ENCODE measurements at regions of chr17 and their contacts with region 1.

Region 1: DNA sequence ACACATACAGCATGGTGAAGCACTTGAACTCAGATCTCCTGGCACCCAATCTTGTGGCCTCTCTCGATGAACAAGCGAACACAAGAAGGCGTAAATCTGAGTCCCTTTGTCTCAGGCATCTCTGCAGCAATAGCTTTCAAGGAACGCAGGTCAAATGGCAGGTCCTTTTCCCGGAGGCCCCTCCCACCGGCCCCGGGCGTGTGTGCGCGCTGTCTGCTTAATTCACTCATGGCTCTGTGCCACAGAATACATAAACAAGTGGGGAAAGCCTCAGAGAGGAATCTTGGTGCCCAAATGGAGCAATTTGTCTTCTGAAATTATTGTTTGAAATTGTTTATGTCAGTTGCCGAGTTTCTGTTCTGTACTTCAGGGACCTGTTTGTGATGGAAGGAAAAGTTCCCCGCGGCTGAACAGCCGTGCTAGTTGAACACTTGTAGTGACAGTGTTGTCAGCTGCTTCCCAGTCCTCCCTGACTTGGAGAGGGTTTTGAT is 14.8 kb downstream of the MYOCD start:
- DNase-seq: no peak
- ATAC-seq: no peak

Region 2: DNA sequence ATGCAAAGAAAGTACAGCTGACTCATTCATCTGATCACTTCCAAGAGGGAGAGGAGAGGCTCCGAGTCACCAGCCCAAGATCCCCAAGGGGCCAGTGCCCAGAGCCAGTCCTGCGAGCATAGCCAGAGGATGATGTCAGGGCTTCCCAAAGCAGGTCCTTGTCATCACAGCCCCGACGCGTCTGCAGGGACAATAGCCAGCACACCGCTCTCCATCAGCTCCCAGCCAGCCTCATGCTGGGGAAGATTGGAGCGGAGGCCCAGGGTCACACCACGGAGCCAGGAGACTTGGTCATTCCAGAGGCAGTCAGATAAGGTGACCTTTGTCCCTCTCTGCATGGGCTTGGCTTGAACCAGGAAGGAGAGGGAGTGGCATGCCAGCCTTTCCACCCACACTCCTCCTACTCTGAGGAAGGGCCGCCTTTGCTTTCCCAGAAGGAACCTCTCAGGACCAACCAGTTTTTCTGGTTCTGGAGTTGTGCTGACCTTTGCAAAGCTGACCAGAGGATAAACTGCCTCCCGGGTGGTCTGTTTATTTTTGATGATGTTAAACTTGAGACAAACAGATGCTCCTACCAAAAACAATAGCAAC is 50.6 kb after region 1 on chr17:
- intact Hi-C with region 1: loop called (anchors 5 to 10 kb)
- DNase-seq: peak; percentile 85
- ATAC-seq: peak; percentile 78 to 85

Region 3: DNA sequence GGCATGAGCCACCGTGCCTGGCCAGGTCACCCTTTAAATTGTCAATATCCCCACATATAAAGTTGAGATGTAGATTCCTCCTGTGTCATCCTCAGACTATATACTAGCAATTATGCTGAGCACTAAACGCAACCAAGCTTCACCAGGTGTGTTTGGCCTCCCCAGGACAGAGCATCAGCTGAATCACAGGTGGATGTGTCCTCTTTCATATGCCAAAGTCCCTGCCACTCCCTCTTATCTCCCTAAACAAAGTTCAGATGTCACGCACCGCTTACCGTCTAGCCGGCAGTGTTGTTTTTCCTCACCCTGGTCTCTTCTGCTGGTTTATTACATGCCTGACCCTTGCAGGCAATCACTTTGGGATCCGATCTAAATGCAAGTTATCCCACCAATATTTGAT is 65.0 kb after region 1 on chr17:
- intact Hi-C with region 1: no loop called
- DNase-seq: no peak
- ATAC-seq: no peak

Region 4: GRCh38 chr17:12842936-12843335 is 162.5 kb after region 1 on chr17:
- intact Hi-C with region 1: no loop called
- DNase-seq: no peak
- ATAC-seq: no peak